CD8-positive, alpha-beta T cell (primary cell): ENCODE measurements at regions of chrX and their contacts with region 1.

Region 1: DNA sequence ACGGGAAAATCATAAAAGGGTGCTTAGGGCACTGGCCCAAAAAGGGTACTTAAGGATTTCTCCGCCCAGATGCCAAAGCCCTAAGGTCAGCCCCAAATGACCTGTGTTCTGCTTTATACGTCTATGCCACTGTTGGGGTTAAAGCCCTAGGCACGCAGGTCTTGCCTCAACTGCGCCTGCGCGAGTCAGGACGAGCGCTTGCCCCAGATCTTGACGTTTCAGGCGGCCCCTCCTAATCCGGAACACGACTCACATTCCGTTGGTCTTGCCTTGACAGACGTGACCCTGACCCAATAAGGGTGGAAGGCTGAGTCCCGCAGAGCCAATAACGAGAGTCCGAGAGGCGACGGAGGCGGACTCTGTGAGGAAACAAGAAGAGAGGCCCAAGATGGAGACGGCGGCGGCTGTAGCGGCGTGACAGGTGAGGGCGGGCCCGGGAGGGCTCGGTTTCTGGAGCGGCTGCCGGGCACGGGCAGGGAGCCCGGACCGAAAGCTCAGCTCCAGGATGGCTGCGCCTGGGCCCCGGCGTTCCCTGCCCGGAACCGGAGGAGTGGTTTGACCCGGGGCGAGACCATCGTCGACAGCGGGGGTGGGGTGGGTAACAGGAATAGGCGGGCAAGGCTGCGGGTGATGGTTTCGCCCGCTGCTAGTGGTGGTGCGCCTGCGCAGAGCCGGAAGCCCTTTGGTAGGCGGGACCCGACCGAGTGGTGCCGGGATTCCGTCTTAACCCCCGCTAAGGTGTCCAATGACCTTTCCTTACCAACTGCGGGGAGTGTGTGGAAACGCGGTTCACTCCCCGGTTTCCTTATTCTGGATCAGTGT is at the start of gene ARAF:
- DNase-seq: peak; percentile 86 to 99 (median 94)
- ATAC-seq: peak; percentile 87
- H3K4me3 ChIP-seq: peak within 1 kb of the TSS; percentile 58 to 91
- H3K4me3 Mint-ChIP-seq: peak within 1 kb of the TSS; percentile 95
- H3K27ac ChIP-seq: peak within 1 kb of the TSS; percentile 98 to 99
- H3K27ac Mint-ChIP-seq: peak within 1 kb of the TSS; percentile 99
- H3K4me1 ChIP-seq: peaks cover 29% of the 10 kb centered on the region
- H3K4me1 Mint-ChIP-seq: peaks cover 46% of the 10 kb centered on the region
- H3K27me3 ChIP-seq: no peaks in the 10 kb centered on the region
- H3K27me3 Mint-ChIP-seq: no peaks in the 10 kb centered on the region
- CTCF ChIP-seq: no peak
- total RNA-seq, gene ARAF: 125 to 134 TPM

Region 2: DNA sequence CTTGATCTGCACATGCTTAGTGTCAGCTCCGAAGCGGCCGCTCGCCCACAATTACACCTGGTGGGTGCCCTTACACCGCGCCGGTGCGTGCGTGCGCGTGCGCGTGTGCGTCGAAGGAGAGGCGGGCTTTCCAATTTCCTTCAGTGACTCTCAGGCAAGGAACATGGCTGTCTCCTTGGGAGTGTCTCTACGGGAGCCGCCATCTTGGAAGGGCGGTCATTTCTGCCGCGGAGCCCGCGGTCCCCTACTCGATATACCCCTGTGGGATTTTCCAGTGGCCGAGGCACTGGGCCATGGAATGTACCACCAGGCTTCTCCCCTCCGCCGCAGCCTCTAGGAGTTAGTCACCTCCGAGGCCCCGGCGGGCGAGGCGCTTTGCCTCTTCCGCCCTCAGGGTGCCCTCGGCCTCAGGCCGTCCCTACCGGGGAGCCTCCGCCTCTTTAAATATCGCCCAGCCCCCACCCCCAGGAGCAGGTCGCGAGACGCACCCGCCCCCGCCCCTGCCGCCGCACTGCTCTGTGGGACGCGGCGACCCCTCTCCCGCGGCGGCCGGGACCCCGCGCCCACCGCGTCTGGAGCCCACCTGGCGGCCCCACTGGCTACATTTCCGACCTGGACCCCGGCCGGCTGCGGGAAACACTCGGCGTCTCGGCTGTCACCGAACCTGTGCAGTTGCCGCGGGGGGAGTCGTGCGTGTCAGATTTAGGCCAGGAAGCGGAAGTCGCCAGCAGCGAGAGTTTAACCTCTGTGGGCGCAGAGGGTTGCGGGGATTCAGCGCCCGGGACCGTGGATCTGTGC is 78.3 kb before region 1 on chrX and contains the start of gene ZNF41:
- CTCF ChIA-PET with region 1: no interaction called
- POLR2A ChIA-PET with region 1: no interaction called
- intact Hi-C with region 1: loop called (anchors 2 kb)
- DNase-seq: peak; percentile 60 to 92 (median 79)
- ATAC-seq: peak; percentile 83
- H3K4me3 ChIP-seq: peak within 1 kb of the TSS; percentile 81 to 86
- H3K4me3 Mint-ChIP-seq: peak within 1 kb of the TSS; percentile 94
- H3K27ac ChIP-seq: peak within 1 kb of the TSS; percentile 81 to 88
- H3K27ac Mint-ChIP-seq: peak within 1 kb of the TSS; percentile 99
- H3K4me1 ChIP-seq: peaks cover 18% of the 10 kb centered on the region
- H3K4me1 Mint-ChIP-seq: peaks cover 42% of the 10 kb centered on the region
- H3K27me3 ChIP-seq: no peaks in the 10 kb centered on the region
- H3K27me3 Mint-ChIP-seq: no peaks in the 10 kb centered on the region
- CTCF ChIP-seq: no peak
- total RNA-seq, gene ZNF41: 2.9 to 4.9 TPM

Region 3: DNA sequence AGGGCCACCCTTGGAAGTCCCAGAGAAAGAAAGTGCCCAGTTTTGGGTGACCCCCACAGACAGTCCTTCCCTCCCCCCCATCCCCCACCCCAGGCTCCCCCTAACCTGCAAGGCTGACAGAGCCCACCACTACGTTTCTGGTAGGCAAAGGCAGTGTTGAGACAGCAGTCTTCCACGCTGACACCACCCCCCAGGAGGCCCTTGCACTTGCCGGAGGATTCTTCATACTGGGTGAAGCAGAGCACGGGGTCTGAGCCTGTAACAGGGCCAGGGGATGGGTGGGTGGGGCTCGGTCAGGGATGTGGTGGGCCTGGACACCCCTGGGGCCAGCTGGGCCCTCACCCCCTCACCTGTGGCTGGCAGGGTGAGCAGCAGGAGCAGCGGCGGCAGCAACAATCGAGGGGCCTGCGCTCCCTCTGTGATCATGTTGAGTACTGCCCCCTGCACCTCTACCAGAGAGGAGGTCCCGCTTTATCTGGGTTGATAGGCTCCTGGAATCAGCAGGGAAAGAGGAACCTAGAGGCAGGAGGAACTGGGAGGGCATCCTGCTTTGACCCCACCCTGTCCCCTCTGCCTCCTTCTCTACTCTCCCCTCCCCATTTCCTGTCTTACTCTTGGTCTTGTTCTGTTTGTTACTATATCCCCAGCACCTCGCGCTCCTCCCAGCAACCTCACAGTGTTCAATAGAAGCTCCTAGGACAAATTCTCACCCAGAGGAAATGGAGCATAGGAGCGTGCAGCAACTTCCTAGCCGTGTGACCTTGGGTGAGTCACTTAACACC is 68.6 kb after region 1 on chrX and contains the start of gene CFP:
- CTCF ChIA-PET with region 1: no interaction called
- POLR2A ChIA-PET with region 1: no interaction called
- intact Hi-C with region 1: loop called in 1 of 2 experiments (anchors 5 kb)
- DNase-seq: peak in 2 of 9 experiments; percentile 37 to 54
- ATAC-seq: peak; percentile 76
- H3K4me3 ChIP-seq: peak within 1 kb of the TSS; percentile 26 to 43
- H3K4me3 Mint-ChIP-seq: peak within 1 kb of the TSS; percentile 77
- H3K27ac ChIP-seq: peak within 1 kb of the TSS in 1 of 2 experiments; percentile 24
- H3K27ac Mint-ChIP-seq: peak within 1 kb of the TSS; percentile 87
- H3K4me1 ChIP-seq: peaks cover 13% of the 10 kb centered on the region
- H3K4me1 Mint-ChIP-seq: peaks cover 14% of the 10 kb centered on the region
- H3K27me3 ChIP-seq: no peaks in the 10 kb centered on the region
- H3K27me3 Mint-ChIP-seq: no peaks in the 10 kb centered on the region
- CTCF ChIP-seq: no peak
- total RNA-seq, gene CFP: 4.8 to 6.2 TPM

Region 4: GRCh38 chrX:47650164-47651042 is 89.4 kb after region 1 on chrX and contains the start of gene ELK1:
- CTCF ChIA-PET with region 1: no interaction called
- POLR2A ChIA-PET with region 1: interaction called, 3 read pairs
- intact Hi-C with region 1: loop called (anchors 1 to 5 kb)
- DNase-seq: peak; percentile 75 to 96 (median 87)
- ATAC-seq: peak; percentile 89
- H3K4me3 ChIP-seq: peak within 1 kb of the TSS; percentile 63 to 69
- H3K4me3 Mint-ChIP-seq: peak within 1 kb of the TSS; percentile 91
- H3K27ac ChIP-seq: peak within 1 kb of the TSS; percentile 61 to 70
- H3K27ac Mint-ChIP-seq: peak within 1 kb of the TSS; percentile 93
- H3K4me1 ChIP-seq: peaks cover 25% of the 10 kb centered on the region
- H3K4me1 Mint-ChIP-seq: peaks cover 44% of the 10 kb centered on the region
- H3K27me3 ChIP-seq: no peaks in the 10 kb centered on the region
- H3K27me3 Mint-ChIP-seq: no peaks in the 10 kb centered on the region
- CTCF ChIP-seq: no peak
- total RNA-seq, gene ELK1: 33.6 to 41.2 TPM

Region 5: DNA sequence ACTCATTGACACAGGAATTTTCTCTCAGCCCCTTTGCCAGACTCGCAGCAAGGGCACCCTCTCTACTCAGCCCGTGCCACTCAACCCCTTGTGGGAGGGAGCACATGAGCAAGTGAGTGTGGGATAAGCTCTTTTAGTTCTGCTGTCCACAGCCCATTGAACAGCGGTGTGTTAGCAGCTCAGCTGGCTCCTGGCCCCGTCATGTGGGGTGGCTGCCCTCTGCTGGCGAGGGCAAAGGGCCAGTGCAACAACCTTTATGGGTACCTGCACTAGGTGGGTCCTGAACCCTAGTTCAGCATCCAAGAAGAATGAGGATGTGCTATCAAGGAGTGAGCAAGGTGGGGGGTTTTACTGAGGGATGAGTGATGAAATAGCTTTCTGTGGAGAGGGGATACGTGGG is 190.6 kb after region 1 on chrX:
- CTCF ChIA-PET with region 1: no interaction called
- POLR2A ChIA-PET with region 1: no interaction called
- intact Hi-C with region 1: loop called in 1 of 2 experiments (anchors 2 kb)
- DNase-seq: peak in 4 of 9 experiments; percentile 9 to 30 (median 18)
- ATAC-seq: no peak
- H3K4me3 ChIP-seq: no peak overlapping the region
- H3K4me3 Mint-ChIP-seq: no peak overlapping the region
- H3K27ac ChIP-seq: no peak overlapping the region
- H3K27ac Mint-ChIP-seq: no peak overlapping the region
- H3K4me1 ChIP-seq: no peaks in the 10 kb centered on the region
- H3K4me1 Mint-ChIP-seq: no peaks in the 10 kb centered on the region
- H3K27me3 ChIP-seq: no peaks in the 10 kb centered on the region
- H3K27me3 Mint-ChIP-seq: peaks cover 4% of the 10 kb centered on the region
- CTCF ChIP-seq: no peak